HCT116 (cell line): ENCODE measurements at regions of chr5 and their contacts with region 1.

Region 1: GRCh38 chr5:97839341-97840081 is 656.5 kb upstream of the RIOK2 start:
- DNase-seq: no peak
- ATAC-seq: no peak
- H3K4me3 ChIP-seq: no peak overlapping the region
- H3K27ac ChIP-seq: no peak overlapping the region
- H3K4me1 ChIP-seq: peaks cover 15 to 18% of the 10 kb centered on the region in 2 experiments
- H3K27me3 ChIP-seq: no peaks in the 10 kb centered on the region
- CTCF ChIP-seq: no peak
- POLR2A ChIP-seq: no peak
- RAD21 ChIP-seq: no peak

Region 2: DNA sequence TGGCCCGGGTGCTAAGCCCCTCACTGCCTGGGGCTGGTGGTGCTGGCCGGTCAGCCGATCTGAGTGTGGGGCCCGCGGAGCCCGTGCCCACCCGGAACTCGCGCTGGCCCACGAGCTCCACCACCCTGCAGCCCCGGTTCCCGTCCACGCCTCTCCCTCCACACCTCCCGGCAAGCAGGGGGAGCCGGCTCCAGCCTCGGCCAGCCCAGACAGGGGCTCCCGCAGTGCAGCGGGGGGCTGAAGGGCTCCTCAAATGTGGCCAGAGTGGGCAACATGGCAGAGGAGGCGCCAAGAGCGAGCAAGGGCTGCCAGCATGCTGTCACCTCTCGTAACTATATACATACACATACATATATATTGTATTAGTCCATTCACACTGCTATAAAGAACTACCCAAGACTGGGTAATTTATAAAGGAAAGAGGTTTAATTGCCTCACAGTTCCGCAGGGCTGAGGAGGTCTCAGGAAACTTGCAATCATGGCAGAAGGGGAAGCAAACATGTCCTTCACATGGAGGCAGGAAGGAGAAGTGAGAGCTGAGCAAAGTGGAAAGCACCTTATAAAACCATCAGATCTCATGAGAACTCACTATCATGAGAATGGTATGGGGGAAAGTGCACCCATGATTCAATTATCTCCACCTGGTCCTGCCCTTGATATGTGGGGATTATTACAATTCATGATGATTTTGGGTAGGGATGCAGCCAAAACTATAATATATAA is 753.9 kb before region 1 on chr5:
- CTCF ChIA-PET with region 1: no interaction called
- POLR2A ChIA-PET with region 1: no interaction called
- RAD21 ChIA-PET with region 1: no interaction called
- intact Hi-C with region 1: loop called (anchors 10 kb)
- DNase-seq: no peak
- ATAC-seq: no peak
- H3K4me3 ChIP-seq: no peak overlapping the region
- H3K27ac ChIP-seq: no peak overlapping the region
- H3K4me1 ChIP-seq: no peaks in the 10 kb centered on the region
- H3K27me3 ChIP-seq: no peaks in the 10 kb centered on the region
- CTCF ChIP-seq: no peak
- POLR2A ChIP-seq: no peak
- RAD21 ChIP-seq: no peak

Region 3: DNA sequence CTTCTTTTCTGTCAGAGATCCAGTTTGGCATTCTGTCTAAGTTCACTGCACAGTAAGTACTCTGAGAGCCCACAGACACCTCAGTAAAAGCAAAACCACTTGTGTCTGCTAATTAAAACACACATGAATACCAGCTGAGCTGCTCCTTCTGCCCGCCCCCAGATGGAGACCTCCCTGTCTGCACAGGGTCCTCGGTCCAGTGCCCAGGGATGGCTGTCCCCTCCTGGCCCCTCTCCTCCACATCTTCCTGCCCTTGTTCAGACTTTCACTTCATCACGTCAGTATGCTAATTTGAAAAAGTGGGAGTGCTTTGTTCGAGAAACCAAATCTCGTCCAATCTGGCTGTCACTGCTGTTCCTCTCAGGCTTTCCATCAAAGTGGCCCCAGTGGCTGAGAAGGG is 740.6 kb before region 1 on chr5:
- CTCF ChIA-PET with region 1: no interaction called
- POLR2A ChIA-PET with region 1: no interaction called
- RAD21 ChIA-PET with region 1: no interaction called
- intact Hi-C with region 1: no loop called
- DNase-seq: no peak
- ATAC-seq: no peak
- H3K4me3 ChIP-seq: no peak overlapping the region
- H3K27ac ChIP-seq: no peak overlapping the region
- H3K4me1 ChIP-seq: no peaks in the 10 kb centered on the region
- H3K27me3 ChIP-seq: no peaks in the 10 kb centered on the region
- CTCF ChIP-seq: no peak
- POLR2A ChIP-seq: no peak
- RAD21 ChIP-seq: no peak

Region 4: DNA sequence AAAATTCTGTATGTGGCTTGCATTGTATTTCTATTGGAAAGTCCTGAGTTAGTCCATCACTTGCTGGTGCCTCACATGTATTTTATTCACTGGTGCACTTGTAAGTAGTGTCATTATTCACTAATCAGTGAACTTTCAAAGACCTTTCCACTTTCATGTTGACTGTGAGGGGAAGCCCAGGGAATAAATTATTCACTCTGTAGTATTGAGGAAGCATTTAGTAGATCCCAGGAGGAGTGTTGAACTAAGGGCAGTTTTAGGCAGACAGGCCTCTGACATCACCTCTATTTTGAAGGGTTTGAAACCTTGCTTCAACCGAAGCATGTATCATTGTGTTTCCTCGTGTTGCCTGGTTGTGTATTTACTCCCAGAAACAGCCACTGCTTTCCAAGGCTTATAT is 48.9 kb after region 1 on chr5:
- CTCF ChIA-PET with region 1: no interaction called
- POLR2A ChIA-PET with region 1: no interaction called
- RAD21 ChIA-PET with region 1: no interaction called
- intact Hi-C with region 1: no loop called
- DNase-seq: no peak
- ATAC-seq: no peak
- H3K4me3 ChIP-seq: no peak overlapping the region
- H3K27ac ChIP-seq: no peak overlapping the region
- H3K4me1 ChIP-seq: no peaks in the 10 kb centered on the region
- H3K27me3 ChIP-seq: no peaks in the 10 kb centered on the region
- CTCF ChIP-seq: no peak
- POLR2A ChIP-seq: no peak
- RAD21 ChIP-seq: no peak

Region 5: DNA sequence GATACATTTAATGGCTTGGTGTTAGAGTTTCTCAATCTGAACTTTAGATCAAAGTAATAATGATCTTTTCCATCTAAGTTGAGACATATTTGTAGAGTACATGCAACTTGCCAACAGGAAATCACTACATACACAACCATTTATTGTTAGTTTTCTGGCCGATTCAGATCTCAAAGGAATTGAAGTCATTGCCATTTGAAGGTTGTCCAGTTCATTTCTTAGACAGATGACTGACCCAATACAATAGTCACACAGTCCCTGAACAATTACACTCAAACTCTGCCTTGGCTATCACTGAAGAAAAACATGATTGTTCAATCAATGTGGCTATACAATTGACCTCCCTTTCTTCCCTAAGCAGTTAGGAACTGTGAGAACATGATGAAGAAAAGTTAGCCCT is 96.7 kb after region 1 on chr5:
- CTCF ChIA-PET with region 1: no interaction called
- POLR2A ChIA-PET with region 1: no interaction called
- RAD21 ChIA-PET with region 1: no interaction called
- intact Hi-C with region 1: no loop called
- DNase-seq: no peak
- ATAC-seq: no peak
- H3K4me3 ChIP-seq: no peak overlapping the region
- H3K27ac ChIP-seq: no peak overlapping the region
- H3K4me1 ChIP-seq: no peaks in the 10 kb centered on the region
- H3K27me3 ChIP-seq: no peaks in the 10 kb centered on the region
- CTCF ChIP-seq: no peak
- POLR2A ChIP-seq: no peak
- RAD21 ChIP-seq: no peak